ENCODE measurements at regions of chr13 and their contacts with region 1.

Region 1: DNA sequence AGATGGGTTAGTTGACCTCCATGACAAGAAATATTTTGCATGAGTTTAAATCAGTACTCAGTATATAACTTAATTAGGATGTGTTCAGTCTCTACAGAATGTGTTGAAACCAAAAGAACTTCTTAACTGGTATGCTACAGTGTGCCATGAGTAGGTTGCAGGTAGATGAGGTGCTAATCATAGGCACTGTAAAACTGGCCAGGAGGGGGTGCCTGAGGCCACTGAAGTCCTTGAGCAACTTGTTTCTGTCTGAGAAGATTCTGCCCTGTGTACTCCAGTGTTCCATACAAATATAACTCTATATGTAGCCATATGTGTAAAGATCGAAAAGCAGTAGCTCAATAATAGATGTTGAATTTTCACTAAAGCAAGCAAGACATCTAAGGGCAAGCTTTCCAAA is 549.2 kb upstream of the KLF12 start:
- DNase-seq: peak; percentile 19
- H3K4me3 ChIP-seq: no peak overlapping the region
- H3K27ac ChIP-seq: no peak overlapping the region
- H3K4me1 ChIP-seq: peaks cover 4% of the 10 kb centered on the region
- H3K27me3 ChIP-seq: no peaks in the 10 kb centered on the region
- CTCF ChIP-seq: no peak
- POLR2A ChIP-seq: no peak

Region 2: DNA sequence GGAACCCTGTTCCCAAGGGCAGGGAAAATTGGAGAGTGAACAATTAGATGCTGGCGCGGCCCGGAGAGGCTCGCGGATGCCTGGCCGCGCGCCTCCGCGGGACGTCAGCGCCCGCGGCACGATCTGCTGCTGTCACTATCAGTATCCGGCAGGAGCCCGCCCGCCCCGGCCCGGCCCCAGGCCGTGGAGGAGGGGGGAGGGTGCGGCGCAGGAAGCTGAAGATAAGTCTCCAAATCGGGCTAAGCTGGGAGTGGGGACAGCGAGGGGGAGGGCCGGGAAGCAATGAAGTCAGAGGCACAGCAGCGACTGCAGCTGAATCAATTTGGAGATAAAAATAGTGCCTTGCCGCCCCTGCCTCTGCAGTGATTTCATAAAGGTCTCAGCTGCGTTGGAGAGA is 107.7 kb before region 1 on chr13:
- CTCF ChIA-PET with region 1: no interaction called
- POLR2A ChIA-PET with region 1: no interaction called
- dilution Hi-C with region 1: no loop called
- intact Hi-C with region 1: loop called (anchors 5 kb)
- DNase-seq: peak; percentile 62
- H3K4me3 ChIP-seq: peak overlapping the region; percentile 14 to 21 (median 19)
- H3K27ac ChIP-seq: no peak overlapping the region
- H3K4me1 ChIP-seq: peaks cover 6% of the 10 kb centered on the region
- H3K27me3 ChIP-seq: peaks cover 0 to 2% of the 10 kb centered on the region in 2 experiments
- CTCF ChIP-seq: no peak
- POLR2A ChIP-seq: no peak

Region 3: GRCh38 chr13:74732736-74733385 is 49.5 kb after region 1 on chr13:
- CTCF ChIA-PET with region 1: no interaction called
- POLR2A ChIA-PET with region 1: no interaction called
- dilution Hi-C with region 1: no loop called
- intact Hi-C with region 1: loop called (anchors 1 kb)
- DNase-seq: no peak
- H3K4me3 ChIP-seq: no peak overlapping the region
- H3K27ac ChIP-seq: no peak overlapping the region
- H3K4me1 ChIP-seq: peaks cover 15% of the 10 kb centered on the region
- H3K27me3 ChIP-seq: no peaks in the 10 kb centered on the region
- CTCF ChIP-seq: no peak
- POLR2A ChIP-seq: no peak